ENCODE measurements at regions of chr14 and their contacts with region 1.

Region 1: DNA sequence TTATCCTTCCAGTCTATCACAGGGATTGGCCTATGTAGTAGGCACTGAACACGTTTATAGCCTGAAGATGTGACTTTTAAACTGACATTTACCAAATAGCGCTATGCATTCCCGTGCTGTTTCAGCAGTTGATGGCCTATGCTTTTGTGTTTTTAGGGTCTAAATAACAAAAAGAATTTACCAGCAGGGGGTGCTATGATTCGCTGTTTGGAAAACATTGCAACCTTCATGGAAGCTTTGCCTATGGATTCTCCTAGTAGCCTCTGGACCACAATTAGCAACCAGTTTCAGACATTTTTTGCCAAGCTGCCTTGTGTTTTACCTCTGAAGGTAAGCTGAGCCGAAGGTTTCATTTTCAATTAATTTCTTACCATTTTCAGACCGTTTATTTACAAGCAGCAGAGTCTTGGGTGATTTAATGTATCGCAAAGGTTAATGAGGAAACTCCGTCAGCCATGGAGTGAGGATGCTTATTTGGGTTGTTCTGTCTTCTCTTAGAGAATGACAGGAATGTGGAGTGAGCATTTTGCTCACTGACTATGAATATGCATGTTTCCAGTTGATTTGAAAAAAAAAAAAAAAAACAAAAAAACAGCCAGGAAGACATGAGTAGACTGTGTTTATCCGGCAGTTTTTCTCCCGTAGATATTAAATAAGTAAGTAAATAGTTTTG is 133.1 kb downstream of the PRIMA1 start:
- DNase-seq: peak; percentile 18
- H3K4me3 Mint-ChIP-seq: no peak overlapping the region
- H3K27ac Mint-ChIP-seq: no peak overlapping the region
- H3K4me1 Mint-ChIP-seq: no peaks in the 10 kb centered on the region
- H3K27me3 Mint-ChIP-seq: peaks cover 16% of the 10 kb centered on the region

Region 2: DNA sequence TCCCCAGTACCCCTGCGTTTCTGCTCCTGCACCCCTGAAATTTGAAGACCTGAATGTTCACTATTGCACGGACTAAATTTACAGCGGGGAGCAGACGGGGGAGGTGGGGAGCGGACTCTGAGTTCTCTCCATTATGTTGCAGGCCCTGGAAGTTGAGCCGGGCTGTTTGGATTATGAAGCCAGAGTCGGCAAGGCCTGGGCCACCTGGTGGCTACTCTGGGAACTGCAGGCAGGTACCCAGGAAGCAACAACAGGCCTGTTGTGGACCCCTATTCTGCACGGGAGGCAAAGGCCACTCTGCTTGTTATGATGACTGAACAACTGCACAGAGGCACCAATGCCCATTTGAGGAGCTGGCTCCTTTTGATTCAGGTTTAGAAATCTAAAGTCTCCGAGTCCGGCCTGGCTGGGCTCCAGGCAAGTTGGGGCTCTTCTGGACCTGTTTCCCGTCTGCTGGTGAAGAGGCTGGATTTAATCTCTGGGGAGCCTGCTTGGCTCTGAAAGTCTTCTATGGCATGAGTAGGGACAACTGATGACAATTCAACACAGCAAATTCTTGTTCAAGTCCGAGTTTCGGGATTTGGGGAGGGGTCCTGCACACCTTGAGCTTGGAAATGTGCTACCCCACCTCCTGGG is 237.8 kb after region 1 on chr14:
- CTCF ChIA-PET with region 1: interaction called, 9 read pairs
- intact Hi-C with region 1: loop called (anchors 1 kb)
- DNase-seq: peak; percentile 78
- H3K4me3 Mint-ChIP-seq: no peak overlapping the region
- H3K27ac Mint-ChIP-seq: no peak overlapping the region
- H3K4me1 Mint-ChIP-seq: no peaks in the 10 kb centered on the region
- H3K27me3 Mint-ChIP-seq: peaks cover 21% of the 10 kb centered on the region

Region 3: GRCh38 chr14:93906341-93907329 is 251.4 kb after region 1 on chr14:
- CTCF ChIA-PET with region 1: interaction called, 7 read pairs
- intact Hi-C with region 1: loop called (anchors 1 kb)
- DNase-seq: peak; percentile 82
- H3K4me3 Mint-ChIP-seq: no peak overlapping the region
- H3K27ac Mint-ChIP-seq: no peak overlapping the region
- H3K4me1 Mint-ChIP-seq: peaks cover 2% of the 10 kb centered on the region
- H3K27me3 Mint-ChIP-seq: peaks cover 4% of the 10 kb centered on the region

Measured in activated naive CD4-positive, alpha-beta T cell treated with anti-CD3 and anti-CD28 coated beads for 36 hours (primary cell).